Activated CD4-positive, alpha-beta memory T cell treated with anti-CD3 and anti-CD28 coated beads, Interleukin-2, amount 10 ng/mL, durations not matched to agents 7 days and 5 days (primary cell): ENCODE measurements at regions of chr16 and their contacts with region 1.

Region 1: DNA sequence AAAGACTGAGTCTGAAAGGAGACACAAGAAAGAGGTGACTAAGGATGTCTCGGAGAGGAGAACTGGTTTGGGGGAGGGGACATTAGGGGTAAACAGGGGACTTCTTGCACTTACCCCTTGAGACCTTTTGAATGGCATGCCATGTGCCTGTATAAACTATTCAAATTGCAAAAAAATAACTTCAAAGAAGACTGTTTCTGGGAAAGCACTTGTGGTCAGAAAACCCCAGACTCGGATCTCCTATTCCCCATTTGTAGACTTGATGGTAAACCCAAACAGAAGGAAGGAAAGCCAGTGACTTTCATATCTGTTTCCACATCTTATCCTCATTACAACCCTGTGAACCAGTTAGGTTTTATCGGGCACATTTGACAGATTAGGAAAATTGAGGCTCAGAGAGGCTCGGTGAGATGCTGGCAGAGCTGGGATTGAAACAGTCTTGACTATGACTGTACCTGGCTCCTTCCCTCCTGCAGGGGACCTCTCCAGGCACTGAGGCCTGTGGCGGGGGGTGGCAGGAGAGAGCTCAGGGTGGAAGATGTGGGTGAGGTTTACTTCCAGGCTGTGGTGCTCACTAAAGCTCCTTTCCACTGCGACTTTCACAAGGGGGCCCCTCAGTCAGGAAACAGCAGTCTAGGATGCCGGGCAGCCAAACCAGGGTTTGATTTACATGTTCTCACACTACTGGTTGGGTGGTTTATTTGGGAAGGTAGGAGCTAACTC is 30.5 kb upstream of the PLCG2 start:
- DNase-seq: peak; percentile 27
- H3K4me3 Mint-ChIP-seq: no peak overlapping the region
- H3K27ac Mint-ChIP-seq: no peak overlapping the region
- H3K4me1 Mint-ChIP-seq: peaks cover 40% of the 10 kb centered on the region
- H3K27me3 Mint-ChIP-seq: no peaks in the 10 kb centered on the region

Region 2: GRCh38 chr16:81730090-81731051 is 18.3 kb before region 1 on chr16:
- CTCF ChIA-PET with region 1: interaction called, 13 read pairs
- POLR2A ChIA-PET with region 1: no interaction called
- DNase-seq: peak; percentile 64
- H3K4me3 Mint-ChIP-seq: peak overlapping the region; percentile 68
- H3K27ac Mint-ChIP-seq: peak overlapping the region; percentile 86
- H3K4me1 Mint-ChIP-seq: peaks cover 25% of the 10 kb centered on the region
- H3K27me3 Mint-ChIP-seq: no peaks in the 10 kb centered on the region